ENCODE measurements at regions of chr21 and their contacts with region 1.

Region 1: GRCh38 chr21:32470206-32470605 is 57.7 kb downstream of the EVA1C start:
- DNase-seq: no peak
- H3K4me3 ChIP-seq: no peak overlapping the region
- H3K27ac ChIP-seq: no peak overlapping the region
- H3K4me1 ChIP-seq: peaks cover 2 to 8% (median 4%) of the 10 kb centered on the region in 4 donors
- H3K27me3 ChIP-seq: no peaks in the 10 kb centered on the region
- CTCF ChIP-seq: no peak
- EP300 ChIP-seq: no peak
- POLR2A ChIP-seq: no peak

Region 2: GRCh38 chr21:32426592-32427051 is 43.6 kb before region 1 on chr21:
- in situ Hi-C with region 1: no loop called
- intact Hi-C with region 1: no loop called
- DNase-seq: no peak
- H3K4me3 ChIP-seq: no peak overlapping the region
- H3K27ac ChIP-seq: no peak overlapping the region
- H3K4me1 ChIP-seq: no peaks in the 10 kb centered on the region
- H3K27me3 ChIP-seq: no peaks in the 10 kb centered on the region
- CTCF ChIP-seq: no peak
- EP300 ChIP-seq: no peak
- POLR2A ChIP-seq: no peak

Region 3: DNA sequence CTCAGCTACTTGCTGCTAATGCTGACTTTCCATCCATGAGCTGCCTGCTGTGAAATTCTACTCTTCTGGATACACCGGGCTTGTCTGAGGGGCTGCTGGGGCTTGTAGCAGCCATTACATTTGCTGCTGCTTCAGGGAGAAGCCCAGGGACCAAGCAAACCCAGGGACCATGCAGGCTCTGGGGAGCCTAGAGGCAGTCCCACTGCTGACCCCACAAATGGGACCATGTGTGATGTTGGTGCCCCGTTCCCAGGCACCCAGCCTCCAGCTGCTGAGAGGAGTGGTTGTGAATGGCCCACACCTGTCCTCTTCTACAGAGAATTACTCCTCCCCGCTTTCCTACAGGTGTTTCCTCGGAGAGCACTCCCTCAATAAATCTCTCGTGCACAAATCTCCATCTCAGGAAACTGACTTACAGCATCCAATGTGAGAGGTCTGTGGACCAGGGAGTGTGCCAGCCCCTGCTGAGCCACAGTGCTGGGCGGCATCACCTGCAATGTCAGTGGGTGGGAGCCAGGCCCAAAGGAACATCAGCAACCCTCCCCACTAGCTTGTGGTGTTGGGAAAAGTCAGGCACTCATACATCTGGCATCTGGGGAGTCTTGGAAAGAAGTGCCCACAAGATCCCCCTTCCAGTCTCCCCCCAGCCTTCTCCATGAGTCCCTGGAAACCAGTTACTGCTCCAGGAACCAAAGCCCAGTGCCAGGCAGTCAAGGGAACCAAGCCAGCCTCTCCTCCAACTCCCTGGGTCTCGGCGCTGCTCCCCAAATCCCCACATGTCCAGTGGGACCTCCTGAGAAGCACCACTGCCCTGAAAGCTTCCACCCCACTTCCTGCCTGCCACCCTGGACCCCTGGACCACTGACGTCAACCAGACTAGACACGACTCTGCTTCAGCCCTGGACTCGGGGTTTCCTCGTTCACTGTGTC is 50.0 kb after region 1 on chr21:
- in situ Hi-C with region 1: no loop called
- intact Hi-C with region 1: loop called (anchors 2 kb)
- DNase-seq: no peak
- H3K4me3 ChIP-seq: no peak overlapping the region
- H3K27ac ChIP-seq: peak overlapping the region in 3 of 4 donors; percentile 48 to 63 (median 53)
- H3K4me1 ChIP-seq: peaks cover 0 to 10% (median 4%) of the 10 kb centered on the region in 4 donors
- H3K27me3 ChIP-seq: no peaks in the 10 kb centered on the region
- CTCF ChIP-seq: no peak
- EP300 ChIP-seq: no peak
- POLR2A ChIP-seq: no peak